AG04449 (cell line): ENCODE measurements at regions of chr2 and their contacts with region 1.

Region 1: DNA sequence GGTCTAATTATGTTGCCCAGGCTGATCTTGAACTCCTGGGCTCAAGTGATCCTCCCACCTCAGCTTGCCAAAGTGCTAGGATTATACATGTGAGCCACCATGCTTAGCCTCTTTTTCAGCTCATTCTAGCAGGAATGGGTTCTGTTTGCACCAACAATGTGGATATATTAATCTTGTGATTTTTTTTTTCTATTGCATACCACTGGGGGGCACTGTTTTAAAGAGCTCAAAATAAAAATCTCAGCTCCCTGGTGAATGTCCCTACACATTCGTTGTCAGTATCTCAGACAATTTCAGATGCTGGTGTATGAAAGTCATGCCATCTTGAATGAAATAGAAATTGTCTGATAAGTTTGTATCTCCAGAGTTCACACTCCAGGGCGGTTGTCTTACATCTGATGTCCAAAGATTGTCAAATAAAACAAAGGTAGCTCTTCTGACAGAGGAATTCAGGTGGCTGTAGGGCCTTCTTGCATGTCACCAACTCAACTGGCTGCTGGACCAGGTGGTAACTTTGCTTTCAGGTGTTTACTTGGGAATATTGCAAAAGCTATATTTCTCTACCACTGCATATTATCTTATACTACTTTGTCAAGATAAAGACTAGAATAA is 3.1 kb upstream of the MATN3 start:
- DNase-seq: no peak
- H3K4me3 ChIP-seq: no peak overlapping the region
- CTCF ChIP-seq: peak; percentile 20

Region 2: GRCh38 chr2:19955544-19956422 is 59.8 kb before region 1 on chr2:
- CTCF ChIA-PET with region 1: interaction called, 41 read pairs
- POLR2A ChIA-PET with region 1: no interaction called
- DNase-seq: peak; percentile 16
- H3K4me3 ChIP-seq: no peak overlapping the region
- CTCF ChIP-seq: peak; percentile 80

Region 3: DNA sequence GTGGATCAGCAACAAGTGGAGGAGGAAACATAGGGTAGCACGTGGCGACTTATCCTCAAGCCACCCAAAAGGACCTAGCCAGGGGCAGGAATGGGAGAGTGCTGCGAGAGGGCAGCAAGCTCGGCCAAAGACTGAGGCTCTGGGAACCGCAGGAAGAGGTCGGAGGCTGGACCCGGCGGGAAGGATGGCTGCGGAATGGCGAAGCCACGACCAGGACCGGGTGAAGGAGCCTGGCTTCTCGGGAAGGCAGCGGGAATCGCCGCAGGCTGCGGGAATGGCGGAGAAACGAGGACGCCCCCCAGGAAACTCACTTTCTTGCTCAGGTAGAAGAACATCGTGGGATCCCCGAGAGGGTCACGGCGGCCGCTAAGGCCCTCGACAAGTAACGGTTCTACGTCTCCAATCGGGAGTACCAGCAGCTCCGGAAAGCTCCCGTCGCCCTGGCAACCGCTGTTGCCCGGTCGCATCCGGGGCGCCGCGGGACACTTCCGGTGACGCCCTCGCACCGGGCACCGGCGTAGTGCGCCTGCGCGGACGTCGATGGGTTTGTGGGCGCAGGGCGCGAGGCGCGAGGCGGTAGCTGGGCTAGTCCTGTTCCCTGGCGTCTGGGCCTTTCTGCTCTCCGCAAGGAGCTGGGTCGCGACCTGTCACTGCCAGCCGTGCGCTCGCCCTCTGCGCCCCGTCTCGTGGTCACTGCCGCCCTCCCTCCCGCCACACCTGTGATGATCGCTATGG is 25.7 kb before region 1 on chr2 and contains the start of gene WDR35:
- CTCF ChIA-PET with region 1: interaction called, 19 read pairs
- POLR2A ChIA-PET with region 1: no interaction called
- DNase-seq: no peak
- H3K4me3 ChIP-seq: peak within 1 kb of the TSS; percentile 86
- CTCF ChIP-seq: no peak

Region 4: GRCh38 chr2:20040489-20041172 is 25.1 kb after region 1 on chr2:
- CTCF ChIA-PET with region 1: interaction called, 79 read pairs
- POLR2A ChIA-PET with region 1: no interaction called
- DNase-seq: no peak
- H3K4me3 ChIP-seq: no peak overlapping the region
- CTCF ChIP-seq: no peak

Region 5: GRCh38 chr2:20071397-20072383 is 56.1 kb after region 1 on chr2:
- CTCF ChIA-PET with region 1: interaction called, 26 read pairs
- POLR2A ChIA-PET with region 1: no interaction called
- DNase-seq: peak; percentile 92
- H3K4me3 ChIP-seq: peak overlapping the region; percentile 32
- CTCF ChIP-seq: no peak

Region 6: DNA sequence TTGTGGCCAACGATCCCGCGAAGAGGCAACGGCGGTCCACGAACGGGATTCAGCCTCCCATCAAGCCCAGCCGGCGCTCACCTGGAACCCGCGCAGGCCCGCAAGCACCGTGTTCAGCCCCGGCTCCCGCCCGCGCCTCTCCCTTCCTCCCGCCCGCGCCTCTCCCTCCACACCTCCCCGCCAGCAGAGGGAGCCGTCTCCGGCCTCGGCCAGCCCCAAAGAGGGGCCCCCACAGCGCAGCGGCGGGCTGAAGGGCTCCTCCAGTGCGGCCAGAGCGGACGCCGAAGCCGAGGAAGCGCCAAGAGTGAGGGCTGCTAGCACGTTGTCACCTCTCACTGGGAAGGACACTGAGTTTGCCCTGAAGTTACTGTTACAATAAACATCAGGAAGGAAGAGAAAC is 91.2 kb after region 1 on chr2:
- CTCF ChIA-PET with region 1: interaction called, 93 read pairs
- POLR2A ChIA-PET with region 1: no interaction called
- DNase-seq: no peak
- H3K4me3 ChIP-seq: peak overlapping the region; percentile 25; the same call in 1 of the 2 replicates
- CTCF ChIP-seq: peak; percentile 47